Activated CD8-positive, alpha-beta T cell treated with anti-CD3 and anti-CD28 coated beads, Interleukin-2, amount 10 ng/mL, durations not matched to agents 7 days and 5 days (primary cell): ENCODE measurements at regions of chr6 and their contacts with region 1.

Region 1: GRCh38 chr6:145929037-145929633 is 35.0 kb downstream of the SHPRH start:
- DNase-seq: peak; percentile 25
- ATAC-seq: no peak
- H3K4me3 Mint-ChIP-seq: no peak overlapping the region
- H3K27ac Mint-ChIP-seq: no peak overlapping the region
- H3K4me1 Mint-ChIP-seq: no peaks in the 10 kb centered on the region
- H3K27me3 Mint-ChIP-seq: no peaks in the 10 kb centered on the region

Region 2: GRCh38 chr6:145948328-145948727 is 19.2 kb after region 1 on chr6:
- CTCF ChIA-PET with region 1: interaction called, 18 read pairs
- POLR2A ChIA-PET with region 1: no interaction called
- DNase-seq: no peak
- ATAC-seq: no peak
- H3K4me3 Mint-ChIP-seq: no peak overlapping the region
- H3K27ac Mint-ChIP-seq: no peak overlapping the region
- H3K4me1 Mint-ChIP-seq: no peaks in the 10 kb centered on the region
- H3K27me3 Mint-ChIP-seq: no peaks in the 10 kb centered on the region

Region 3: GRCh38 chr6:146065690-146066089 is 136.6 kb after region 1 on chr6:
- CTCF ChIA-PET with region 1: no interaction called
- POLR2A ChIA-PET with region 1: no interaction called
- DNase-seq: no peak
- ATAC-seq: no peak
- H3K4me3 Mint-ChIP-seq: no peak overlapping the region
- H3K27ac Mint-ChIP-seq: no peak overlapping the region
- H3K4me1 Mint-ChIP-seq: no peaks in the 10 kb centered on the region
- H3K27me3 Mint-ChIP-seq: no peaks in the 10 kb centered on the region

Region 4: GRCh38 chr6:146700078-146700686 is 771.0 kb after region 1 on chr6:
- CTCF ChIA-PET with region 1: interaction called, 14 read pairs
- POLR2A ChIA-PET with region 1: no interaction called
- DNase-seq: peak; percentile 37
- ATAC-seq: peak; percentile 44
- H3K4me3 Mint-ChIP-seq: no peak overlapping the region
- H3K27ac Mint-ChIP-seq: no peak overlapping the region
- H3K4me1 Mint-ChIP-seq: no peaks in the 10 kb centered on the region
- H3K27me3 Mint-ChIP-seq: peaks cover 5% of the 10 kb centered on the region